ENCODE measurements at regions of chr6 and their contacts with region 1.

Region 1: DNA sequence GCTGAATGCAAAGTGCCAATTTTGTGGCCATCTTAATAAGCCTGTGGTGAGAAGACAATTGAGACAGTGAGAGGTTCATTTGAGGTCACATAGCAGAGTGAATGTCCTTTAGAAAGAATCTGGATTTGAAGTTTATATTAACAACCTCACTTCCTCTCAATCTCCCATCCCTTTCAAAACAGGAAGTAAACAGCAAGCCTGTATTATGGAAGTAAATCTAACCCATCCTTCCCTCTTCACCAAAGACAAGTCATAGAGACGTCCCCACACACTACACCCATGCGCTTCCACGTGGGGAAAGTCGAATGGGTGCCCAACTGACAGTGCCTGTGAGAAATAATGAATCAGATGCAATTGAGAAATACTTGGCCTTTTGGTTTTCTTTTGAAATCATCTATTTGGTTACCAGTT is 28.8 kb upstream of the CCND3 start:
- DNase-seq: no peak
- ATAC-seq: no peak
- H3K4me3 Mint-ChIP-seq: no peak overlapping the region
- H3K27ac Mint-ChIP-seq: peak overlapping the region; percentile 75
- H3K4me1 Mint-ChIP-seq: peaks cover 50% of the 10 kb centered on the region
- H3K27me3 Mint-ChIP-seq: no peaks in the 10 kb centered on the region
- CTCF ChIP-seq: no peak

Region 2: GRCh38 chr6:41878961-41879405 is 91.5 kb before region 1 on chr6:
- CTCF ChIA-PET with region 1: no interaction called
- POLR2A ChIA-PET with region 1: no interaction called
- intact Hi-C with region 1: no loop called
- DNase-seq: no peak
- ATAC-seq: no peak
- H3K4me3 Mint-ChIP-seq: no peak overlapping the region
- H3K27ac Mint-ChIP-seq: no peak overlapping the region
- H3K4me1 Mint-ChIP-seq: peaks cover 7% of the 10 kb centered on the region
- H3K27me3 Mint-ChIP-seq: no peaks in the 10 kb centered on the region
- CTCF ChIP-seq: no peak

Region 3: GRCh38 chr6:41895300-41896233 is 74.9 kb before region 1 on chr6 and contains the start of gene USP49:
- CTCF ChIA-PET with region 1: no interaction called
- POLR2A ChIA-PET with region 1: interaction called, 10 read pairs
- intact Hi-C with region 1: no loop called
- DNase-seq: peak; percentile 90
- ATAC-seq: peak; percentile 92
- H3K4me3 Mint-ChIP-seq: no peak within 1 kb of the TSS
- H3K27ac Mint-ChIP-seq: peak within 1 kb of the TSS; percentile 95
- H3K4me1 Mint-ChIP-seq: peaks cover 14% of the 10 kb centered on the region
- H3K27me3 Mint-ChIP-seq: no peaks in the 10 kb centered on the region
- CTCF ChIP-seq: no peak
- total RNA-seq, gene USP49: 7.7 and 8.0 TPM in 2 replicates

Region 4: DNA sequence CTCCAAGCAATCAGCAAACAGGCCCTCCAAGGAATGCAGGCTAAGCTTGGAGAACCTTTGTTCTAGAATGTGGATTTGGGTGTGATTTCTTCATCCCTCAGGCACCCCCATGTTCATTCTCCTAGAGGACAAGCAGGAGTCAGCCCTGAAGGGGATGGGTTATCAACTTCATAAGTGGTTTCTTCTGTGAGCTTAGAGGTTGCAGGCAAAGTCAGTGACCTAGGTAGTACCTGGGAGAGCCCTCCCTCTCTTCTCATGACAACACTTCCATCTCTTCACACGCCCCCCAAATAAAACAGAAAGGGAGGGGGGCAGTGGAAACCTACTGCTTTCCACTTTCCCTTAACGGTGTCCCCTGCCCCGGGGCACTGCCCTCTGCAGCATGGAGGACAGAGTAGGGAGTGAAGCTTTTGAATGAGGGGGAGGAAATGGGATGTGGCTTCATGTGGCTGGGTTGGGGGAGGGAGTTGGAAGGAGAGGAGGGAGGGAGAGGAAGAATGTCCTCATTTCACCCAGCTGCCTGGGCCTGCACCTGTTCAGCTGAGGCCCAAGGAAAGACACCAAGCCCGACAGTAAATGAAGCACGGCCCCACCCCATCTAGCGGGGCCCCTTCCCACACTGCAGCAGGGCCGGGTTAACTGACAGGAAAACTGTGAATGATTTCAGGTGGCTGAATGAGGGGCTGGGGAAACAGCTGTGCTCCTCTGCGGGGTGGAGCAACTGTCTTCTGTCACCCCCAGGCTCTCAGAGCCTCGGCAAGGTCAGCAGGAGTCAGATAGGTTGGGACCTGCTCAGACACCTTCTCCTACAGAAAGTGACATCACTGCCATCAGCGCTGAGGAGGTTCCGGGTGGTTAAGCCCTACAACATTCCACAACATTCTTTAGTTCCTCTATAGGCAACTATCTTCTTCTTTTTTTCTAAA is 39.8 kb after region 1 on chr6:
- CTCF ChIA-PET with region 1: no interaction called
- POLR2A ChIA-PET with region 1: no interaction called
- intact Hi-C with region 1: loop called (anchors 5 kb)
- DNase-seq: no peak
- ATAC-seq: peak; percentile 38
- H3K4me3 Mint-ChIP-seq: peak overlapping the region; percentile 59
- H3K27ac Mint-ChIP-seq: peak overlapping the region; percentile 87
- H3K4me1 Mint-ChIP-seq: peaks cover 59% of the 10 kb centered on the region
- H3K27me3 Mint-ChIP-seq: no peaks in the 10 kb centered on the region
- CTCF ChIP-seq: no peak

Measured in activated B cell treated with CpG ODN at 0.5 μM for 24 hours (primary cell).